ENCODE measurements at regions of chr3 and their contacts with region 1.

Region 1: DNA sequence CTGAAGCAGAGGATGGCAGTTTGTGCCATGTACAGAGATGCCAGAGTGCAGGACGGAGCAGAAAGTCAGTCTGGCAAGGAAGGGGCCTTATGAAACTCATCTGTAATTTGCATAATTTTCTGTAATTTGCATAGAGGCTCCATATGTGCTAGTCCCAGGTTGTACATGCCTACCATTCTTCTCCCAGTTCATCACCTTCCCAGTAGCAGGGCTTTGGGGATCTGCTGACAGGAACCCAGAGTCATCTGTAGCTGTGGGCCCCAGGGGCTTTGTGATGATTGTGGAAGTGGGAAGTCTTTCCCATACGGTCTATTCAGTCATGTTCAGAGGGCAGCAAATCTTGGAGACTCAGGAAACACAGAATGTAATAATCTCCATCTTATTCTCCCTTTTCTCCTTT is 42.4 kb upstream of the SIAH2 start:
- DNase-seq: no peak
- CTCF ChIP-seq: no peak

Region 2: DNA sequence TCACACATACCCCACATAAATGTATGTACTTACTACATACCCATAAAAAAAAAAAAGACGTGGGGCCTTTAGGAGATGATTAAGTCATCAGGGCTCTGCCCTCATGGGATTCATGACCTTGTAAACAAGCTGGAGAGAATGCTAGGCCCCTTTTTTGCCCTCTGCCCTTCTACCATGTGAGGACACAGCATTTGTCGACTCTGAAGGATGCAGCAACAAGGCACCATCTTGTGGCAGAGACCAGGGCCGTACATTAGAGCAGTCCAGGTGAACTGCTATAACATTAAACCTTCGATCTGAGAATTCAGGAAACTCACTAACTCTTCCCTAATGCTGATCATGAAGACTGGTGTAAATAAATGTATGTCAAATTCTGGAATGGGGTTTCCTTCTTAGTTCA is 11.7 kb before region 1 on chr3:
- CTCF ChIA-PET with region 1: interaction called, 16 read pairs
- POLR2A ChIA-PET with region 1: no interaction called
- DNase-seq: no peak
- CTCF ChIP-seq: no peak

Measured in GM10248 (cell line).